T-cell (primary cell): ENCODE measurements at regions of chr5 and their contacts with region 1.

Region 1: GRCh38 chr5:150700594-150701293 is at the start of gene RBM22:
- DNase-seq: peak; percentile 82 to 96 (median 91)
- ATAC-seq: peak; percentile 96
- H3K4me3 ChIP-seq: peak within 1 kb of the TSS; percentile 92 to 98
- H3K4me3 Mint-ChIP-seq: no peak within 1 kb of the TSS
- H3K27ac ChIP-seq: peak within 1 kb of the TSS; percentile 98
- H3K27ac Mint-ChIP-seq: no peak within 1 kb of the TSS
- H3K4me1 ChIP-seq: peaks cover 9 to 14% of the 10 kb centered on the region in 2 experiments
- H3K4me1 Mint-ChIP-seq: peaks cover 0 to 11% (median 5%) of the 10 kb centered on the region in 3 donors
- H3K27me3 ChIP-seq: no peaks in the 10 kb centered on the region
- H3K27me3 Mint-ChIP-seq: no peaks in the 10 kb centered on the region
- total RNA-seq, gene RBM22: 73.3 to 98.8 (median 82.3) TPM

Region 2: DNA sequence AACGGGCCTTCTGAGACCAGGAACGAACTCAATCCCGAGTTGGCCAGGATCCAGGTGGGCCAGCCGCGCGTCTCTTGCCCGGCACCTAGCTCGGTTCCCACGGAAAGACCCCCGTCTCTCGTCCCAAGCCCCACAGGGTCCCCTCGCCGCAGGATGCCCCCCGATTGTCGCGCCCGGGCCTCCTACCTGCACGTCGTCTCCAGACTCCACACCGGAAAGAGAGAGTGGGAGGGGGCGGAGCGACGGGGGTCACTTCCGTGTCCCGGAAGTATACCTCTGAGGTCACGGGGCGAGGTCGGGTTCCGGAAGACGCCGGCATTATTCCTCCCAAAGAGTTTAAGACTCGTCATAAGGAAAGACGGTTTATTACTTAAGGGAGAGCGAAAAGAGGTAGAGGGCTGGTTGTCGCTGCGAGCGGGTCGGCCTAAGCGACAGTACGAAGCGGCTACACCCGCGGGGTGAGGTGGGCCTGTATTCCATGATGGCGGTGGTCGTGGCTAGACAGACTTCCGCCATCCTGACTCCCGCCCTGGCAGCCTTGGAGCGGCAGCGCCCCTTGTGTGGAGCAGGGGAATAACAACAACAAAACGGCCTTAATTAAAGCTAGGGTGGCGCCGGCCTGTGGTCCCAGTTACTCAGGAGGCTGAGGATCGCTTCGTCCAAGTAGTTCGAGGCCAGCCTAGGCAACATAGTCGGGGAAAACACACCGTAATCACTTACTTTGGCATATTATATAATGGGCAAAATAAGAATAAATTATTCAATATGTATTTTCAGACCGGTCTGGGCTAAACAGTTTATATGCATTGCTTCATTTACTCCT is 251.0 kb before region 1 on chr5 and contains the start of gene RPS14:
- CTCF ChIA-PET with region 1: interaction called in 1 of 2 experiments, 11 read pairs
- POLR2A ChIA-PET with region 1: interaction called in 1 of 2 experiments, 5 read pairs
- DNase-seq: peak; percentile 88 to 98 (median 94)
- ATAC-seq: peak; percentile 93 to 96 (median 95)
- H3K4me3 ChIP-seq: peak within 1 kb of the TSS; percentile 94 to 97
- H3K4me3 Mint-ChIP-seq: peak within 1 kb of the TSS; percentile 87 to 99 (median 95)
- H3K27ac ChIP-seq: peak within 1 kb of the TSS; percentile 97
- H3K27ac Mint-ChIP-seq: peak within 1 kb of the TSS; percentile 100
- H3K4me1 ChIP-seq: peaks cover 18 to 31% of the 10 kb centered on the region in 2 experiments
- H3K4me1 Mint-ChIP-seq: peaks cover 26 to 37% (median 35%) of the 10 kb centered on the region in 3 donors
- H3K27me3 ChIP-seq: no peaks in the 10 kb centered on the region
- H3K27me3 Mint-ChIP-seq: no peaks in the 10 kb centered on the region
- total RNA-seq, gene RPS14: 4,124 to 5,450 (median 5,009) TPM

Region 3: DNA sequence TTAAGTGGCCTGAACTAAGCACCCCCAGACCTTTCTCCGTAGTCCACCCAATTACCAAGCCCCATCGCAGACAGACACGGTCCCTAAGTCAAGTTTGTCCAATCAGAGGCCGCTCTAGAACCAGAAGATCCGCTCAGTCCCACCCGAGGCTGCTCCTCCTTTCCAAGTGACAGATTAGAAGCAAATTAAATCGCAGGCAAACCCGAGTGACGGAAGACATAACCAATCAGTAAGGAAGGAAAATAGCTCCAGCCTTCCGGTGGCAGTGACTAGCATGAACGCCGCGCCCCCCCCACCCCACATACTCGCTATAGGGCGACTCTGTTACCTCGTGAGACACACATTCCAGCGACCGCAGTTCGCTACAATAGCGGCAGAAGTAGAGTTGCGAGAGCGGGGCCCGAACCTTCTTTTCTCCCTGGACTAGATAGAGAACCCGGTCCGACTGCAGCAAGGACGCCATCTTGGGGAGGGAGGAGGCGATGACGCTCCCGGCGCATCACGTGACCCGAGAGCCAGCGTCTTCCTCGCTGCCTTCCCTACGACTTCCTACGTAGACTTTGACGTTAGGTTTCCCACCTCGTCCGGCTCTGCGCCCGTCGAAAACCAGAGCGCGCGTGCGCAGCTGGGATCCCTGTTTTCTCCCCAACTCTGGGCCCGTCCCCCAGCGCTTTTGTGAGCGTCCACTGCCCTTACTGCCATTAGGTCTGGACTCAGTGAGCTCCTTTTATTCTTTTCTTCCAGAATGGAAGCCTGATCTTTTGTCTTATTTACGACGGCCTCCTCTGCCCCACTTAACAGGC is 58.0 kb after region 1 on chr5 and contains the start of gene DCTN4:
- CTCF ChIA-PET with region 1: interaction called in 1 of 2 experiments, 26 read pairs
- POLR2A ChIA-PET with region 1: interaction called, 7 to 21 read pairs
- DNase-seq: peak; percentile 88 to 98 (median 92)
- ATAC-seq: peak; percentile 92 to 95 (median 94)
- H3K4me3 ChIP-seq: peak within 1 kb of the TSS; percentile 79 to 89
- H3K4me3 Mint-ChIP-seq: no peak within 1 kb of the TSS
- H3K27ac ChIP-seq: peak within 1 kb of the TSS; percentile 90
- H3K27ac Mint-ChIP-seq: no peak within 1 kb of the TSS
- H3K4me1 ChIP-seq: peaks cover 11 to 20% of the 10 kb centered on the region in 2 experiments
- H3K4me1 Mint-ChIP-seq: peaks cover 29 to 40% (median 37%) of the 10 kb centered on the region in 3 donors
- H3K27me3 ChIP-seq: no peaks in the 10 kb centered on the region
- H3K27me3 Mint-ChIP-seq: no peaks in the 10 kb centered on the region
- total RNA-seq, gene DCTN4: 36.9 to 79.8 (median 38.4) TPM

Region 4: GRCh38 chr5:150778517-150779396 is 78.0 kb after region 1 on chr5 and contains the start of gene SMIM3:
- CTCF ChIA-PET with region 1: interaction called, 6 to 20 read pairs
- POLR2A ChIA-PET with region 1: interaction called, 4 to 10 read pairs
- DNase-seq: peak; percentile 35 to 74 (median 56)
- ATAC-seq: peak; percentile 72 to 75 (median 72)
- H3K4me3 ChIP-seq: peak within 1 kb of the TSS; percentile 81 to 94
- H3K4me3 Mint-ChIP-seq: peak within 1 kb of the TSS; percentile 98 to 99 (median 99)
- H3K27ac ChIP-seq: peak within 1 kb of the TSS; percentile 47
- H3K27ac Mint-ChIP-seq: peak within 1 kb of the TSS; percentile 92 to 94
- H3K4me1 ChIP-seq: peaks cover 18 to 43% of the 10 kb centered on the region in 2 experiments
- H3K4me1 Mint-ChIP-seq: peaks cover 51 to 59% (median 58%) of the 10 kb centered on the region in 3 donors
- H3K27me3 ChIP-seq: no peaks in the 10 kb centered on the region
- H3K27me3 Mint-ChIP-seq: peaks cover 1% of the 10 kb centered on the region in 2 donors
- total RNA-seq, gene SMIM3: 2.8 to 9.1 (median 5.7) TPM

Region 5: DNA sequence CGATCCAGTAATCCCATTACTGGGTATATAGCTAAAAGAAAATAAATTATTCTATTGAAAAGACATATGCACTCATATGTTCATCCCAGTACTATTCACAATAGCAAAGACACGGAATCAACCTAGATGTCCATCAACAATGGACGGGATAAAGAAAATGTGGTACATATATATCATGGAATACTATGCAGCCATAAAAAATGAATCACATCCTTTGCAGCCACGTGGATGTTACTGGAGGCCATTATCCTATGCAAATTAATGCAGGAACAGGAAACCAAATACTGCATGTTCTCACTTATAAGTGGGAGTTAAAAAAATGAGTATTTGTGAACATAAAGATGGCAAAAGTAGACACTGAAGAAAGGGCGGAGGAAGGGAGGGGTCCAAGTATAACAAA is 129.0 kb after region 1 on chr5:
- CTCF ChIA-PET with region 1: no interaction called
- POLR2A ChIA-PET with region 1: no interaction called
- DNase-seq: no peak
- ATAC-seq: no peak
- H3K4me3 ChIP-seq: no peak overlapping the region
- H3K4me3 Mint-ChIP-seq: no peak overlapping the region
- H3K27ac ChIP-seq: no peak overlapping the region
- H3K27ac Mint-ChIP-seq: no peak overlapping the region
- H3K4me1 ChIP-seq: no peaks in the 10 kb centered on the region
- H3K4me1 Mint-ChIP-seq: no peaks in the 10 kb centered on the region
- H3K27me3 ChIP-seq: no peaks in the 10 kb centered on the region
- H3K27me3 Mint-ChIP-seq: no peaks in the 10 kb centered on the region

Region 6: DNA sequence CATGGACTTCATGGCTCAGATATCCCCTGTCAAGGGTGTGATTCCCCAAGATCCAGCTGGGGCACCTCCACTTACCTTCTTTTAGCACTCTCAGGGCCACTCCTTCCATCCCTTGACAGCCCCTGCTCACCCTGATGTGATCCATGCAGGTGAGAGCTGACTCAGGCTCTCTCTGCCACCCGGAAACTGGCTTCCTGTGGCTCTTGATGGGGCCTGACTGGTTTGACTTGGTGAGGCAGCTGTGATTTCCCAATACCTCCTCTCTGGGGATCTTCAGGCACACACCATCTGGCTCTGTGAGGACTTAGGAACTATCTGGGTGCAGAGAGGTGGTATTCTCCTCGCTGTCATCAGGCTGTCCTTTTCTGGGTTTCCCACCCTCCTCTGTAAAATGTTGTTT is 898.2 kb after region 1 on chr5:
- CTCF ChIA-PET with region 1: no interaction called
- POLR2A ChIA-PET with region 1: no interaction called
- DNase-seq: no peak
- ATAC-seq: no peak
- H3K4me3 ChIP-seq: no peak overlapping the region
- H3K4me3 Mint-ChIP-seq: no peak overlapping the region
- H3K27ac ChIP-seq: no peak overlapping the region
- H3K27ac Mint-ChIP-seq: no peak overlapping the region
- H3K4me1 ChIP-seq: no peaks in the 10 kb centered on the region
- H3K4me1 Mint-ChIP-seq: no peaks in the 10 kb centered on the region
- H3K27me3 ChIP-seq: peaks cover 0 to 7% of the 10 kb centered on the region in 2 experiments
- H3K27me3 Mint-ChIP-seq: no peaks in the 10 kb centered on the region